IMR-90 (cell line): ENCODE measurements at regions of chr12 and their contacts with region 1.

Region 1: DNA sequence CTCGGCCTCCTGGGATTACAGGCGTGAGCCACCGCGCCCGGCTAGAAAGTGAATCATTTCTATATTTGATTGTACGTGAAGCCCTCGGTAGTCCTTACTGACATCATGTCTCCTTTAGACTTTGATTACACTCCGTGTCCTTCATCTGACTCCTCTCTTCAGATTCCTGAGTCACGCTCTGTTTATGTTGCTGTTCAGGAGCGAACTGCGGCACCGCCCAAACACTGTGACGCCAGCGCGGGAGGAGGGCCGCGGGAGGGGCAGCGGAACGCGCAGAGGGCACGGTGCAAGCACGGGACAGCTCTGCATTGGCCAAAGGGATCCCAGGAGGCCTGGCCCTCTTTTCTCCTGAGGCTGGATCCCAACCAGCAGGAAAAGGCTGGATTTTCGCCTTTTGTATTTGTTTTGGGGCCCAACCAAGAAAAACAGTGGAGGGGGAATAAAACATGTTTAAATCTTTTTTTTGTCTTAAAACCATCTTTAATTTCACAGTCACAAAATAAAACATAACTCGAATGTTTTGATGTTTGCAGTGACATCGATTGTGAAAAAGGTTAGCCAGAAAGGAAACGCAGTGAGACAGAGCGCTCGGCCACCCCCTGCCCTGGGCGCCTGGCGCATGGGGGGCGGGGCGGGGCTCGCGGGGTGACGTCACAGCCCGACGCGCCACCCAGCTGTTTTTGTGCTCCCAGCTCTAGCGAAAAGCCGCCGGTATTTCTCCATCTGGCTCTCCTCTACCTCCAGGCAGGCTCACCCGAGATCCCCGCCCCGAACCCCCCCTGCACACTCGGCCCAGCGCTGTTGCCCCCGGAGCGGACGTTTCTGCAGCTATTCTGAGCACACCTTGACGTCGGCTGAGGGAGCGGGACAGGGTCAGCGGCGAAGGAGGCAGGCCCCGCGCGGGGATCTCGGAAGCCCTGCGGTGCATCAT is at the start of gene GABARAPL1:
- DNase-seq: peak; percentile 100
- ATAC-seq: peak; percentile 90
- H3K4me3 ChIP-seq: peak within 1 kb of the TSS; percentile 89
- H3K27ac ChIP-seq: peak within 1 kb of the TSS; percentile 98
- H3K4me1 ChIP-seq: peaks cover 3% of the 10 kb centered on the region; the same call in 1 of the 2 replicates
- H3K27me3 ChIP-seq: no peaks in the 10 kb centered on the region
- CTCF ChIP-seq: no peak
- POLR2A ChIP-seq: peak; percentile 88
- RAD21 ChIP-seq: no peak; the same call in 1 of the 2 replicates
- total RNA-seq, gene GABARAPL1: 51.6 and 63.0 TPM in 2 replicates

Region 2: DNA sequence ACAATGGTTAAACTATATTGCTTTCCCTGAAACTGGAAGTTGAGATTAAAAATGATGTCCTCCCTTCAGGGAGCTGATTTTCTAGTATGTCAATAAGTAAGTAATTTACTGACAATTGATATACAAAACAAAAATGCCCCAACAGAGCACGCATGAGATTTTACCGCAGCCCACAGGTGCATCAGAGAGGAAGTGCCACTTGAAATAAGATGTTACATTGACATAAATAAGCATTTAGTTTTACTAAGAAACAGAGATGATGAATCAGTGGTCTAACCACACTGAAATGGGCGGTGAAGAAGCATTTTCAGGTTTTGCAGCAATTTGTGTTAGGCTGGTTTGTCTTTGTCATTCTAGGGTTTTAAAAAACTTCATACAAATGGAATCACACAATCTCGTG is 470.7 kb before region 1 on chr12:
- CTCF ChIA-PET with region 1: no interaction called
- POLR2A ChIA-PET with region 1: no interaction called
- dilution Hi-C with region 1: no loop called
- in situ Hi-C with region 1: no loop called
- intact Hi-C with region 1: loop called (anchors 10 kb)
- DNase-seq: no peak
- ATAC-seq: no peak
- H3K4me3 ChIP-seq: no peak overlapping the region
- H3K27ac ChIP-seq: no peak overlapping the region
- H3K4me1 ChIP-seq: no peaks in the 10 kb centered on the region
- H3K27me3 ChIP-seq: peaks cover 10% of the 10 kb centered on the region
- CTCF ChIP-seq: no peak
- POLR2A ChIP-seq: no peak
- RAD21 ChIP-seq: no peak

Region 3: DNA sequence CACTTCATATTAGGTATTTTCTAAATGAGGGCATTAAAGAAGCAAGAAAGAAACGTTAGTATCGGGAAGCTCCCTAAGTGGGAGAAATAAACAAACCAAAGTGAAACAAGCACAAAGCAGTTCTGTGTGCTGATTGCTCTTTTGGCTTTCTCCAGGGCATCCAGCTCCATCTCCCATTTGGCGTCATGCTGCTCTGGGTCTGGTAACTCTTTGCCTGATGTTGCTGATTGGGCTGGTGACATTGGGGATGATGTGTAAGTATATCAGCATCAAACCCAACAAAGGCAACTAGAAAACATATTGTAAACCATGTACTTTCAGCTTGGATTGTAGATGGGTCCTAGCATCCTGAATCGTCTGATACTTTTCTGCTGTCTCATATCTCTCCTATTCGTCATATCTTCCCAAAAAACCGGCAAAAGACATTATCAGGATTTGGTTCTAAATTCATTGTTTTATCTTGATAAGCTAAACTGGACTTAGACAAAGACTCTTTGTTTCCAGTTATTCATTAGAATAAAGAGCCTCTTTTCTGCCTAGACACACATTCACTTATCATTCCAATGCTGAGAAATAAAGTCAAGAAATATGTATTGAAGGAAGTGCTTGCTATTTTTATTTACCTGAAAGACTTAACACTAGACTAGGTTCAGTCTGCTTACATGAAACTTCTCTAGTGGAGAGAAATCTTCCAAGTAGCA is 199.7 kb before region 1 on chr12:
- CTCF ChIA-PET with region 1: no interaction called
- POLR2A ChIA-PET with region 1: no interaction called
- dilution Hi-C with region 1: no loop called
- in situ Hi-C with region 1: no loop called
- intact Hi-C with region 1: loop called (anchors 2 kb)
- DNase-seq: no peak
- ATAC-seq: no peak
- H3K4me3 ChIP-seq: no peak overlapping the region
- H3K27ac ChIP-seq: no peak overlapping the region
- H3K4me1 ChIP-seq: peaks cover 5% of the 10 kb centered on the region
- H3K27me3 ChIP-seq: peaks cover 2% of the 10 kb centered on the region
- CTCF ChIP-seq: no peak
- POLR2A ChIP-seq: no peak
- RAD21 ChIP-seq: no peak

Region 4: DNA sequence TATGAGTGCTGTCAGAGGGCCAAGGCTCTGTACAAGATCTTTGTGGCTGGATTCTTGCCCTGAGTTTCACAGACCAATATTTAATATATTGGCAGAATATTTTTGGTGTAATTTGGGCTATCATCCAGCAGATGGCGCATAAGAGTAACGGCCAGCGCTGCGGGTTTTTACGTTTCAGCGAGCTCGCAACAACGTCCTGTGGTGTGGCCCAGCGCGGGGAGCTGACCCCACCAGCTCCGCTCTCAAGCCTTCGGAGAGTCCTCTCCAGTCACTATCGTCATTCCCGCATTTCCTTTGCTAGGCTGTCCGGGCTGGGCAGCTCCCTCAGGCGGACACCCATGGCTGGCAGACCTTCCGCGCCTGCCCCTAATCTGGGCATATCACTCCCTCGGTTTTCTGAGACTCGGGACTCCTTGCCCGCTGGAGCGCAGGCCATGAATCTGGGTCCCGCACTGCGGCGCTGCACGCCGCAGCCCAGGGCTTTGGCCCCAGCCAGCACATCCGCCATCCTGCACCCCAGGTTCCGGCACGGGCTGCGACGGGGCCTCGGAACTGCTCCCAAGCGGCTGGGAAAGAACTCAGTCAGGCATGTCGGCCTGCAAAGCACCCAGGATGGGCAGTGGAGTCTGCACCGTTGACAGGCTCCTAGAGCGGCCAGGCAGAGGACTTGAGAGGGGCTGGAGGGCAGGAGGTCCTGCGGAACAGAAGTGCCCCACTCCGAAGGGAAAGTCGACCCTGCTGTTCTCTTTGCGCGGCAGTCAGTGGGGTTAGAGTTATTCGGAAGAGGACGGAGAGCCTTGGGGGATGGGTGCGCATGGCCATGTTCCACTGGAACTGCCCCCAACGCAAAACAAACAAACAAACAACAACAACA is 59.0 kb before region 1 on chr12:
- CTCF ChIA-PET with region 1: interaction called, 6 read pairs
- POLR2A ChIA-PET with region 1: interaction called, 9 read pairs
- dilution Hi-C with region 1: no loop called
- in situ Hi-C with region 1: no loop called
- intact Hi-C with region 1: loop called (anchors 1 kb)
- DNase-seq: peak; percentile 63
- ATAC-seq: peak; percentile 95
- H3K4me3 ChIP-seq: peak overlapping the region; percentile 37
- H3K27ac ChIP-seq: peak overlapping the region; percentile 68
- H3K4me1 ChIP-seq: peaks cover 8% of the 10 kb centered on the region
- H3K27me3 ChIP-seq: no peaks in the 10 kb centered on the region
- CTCF ChIP-seq: peak; percentile 75
- POLR2A ChIP-seq: no peak
- RAD21 ChIP-seq: peak; percentile 77

Region 5: DNA sequence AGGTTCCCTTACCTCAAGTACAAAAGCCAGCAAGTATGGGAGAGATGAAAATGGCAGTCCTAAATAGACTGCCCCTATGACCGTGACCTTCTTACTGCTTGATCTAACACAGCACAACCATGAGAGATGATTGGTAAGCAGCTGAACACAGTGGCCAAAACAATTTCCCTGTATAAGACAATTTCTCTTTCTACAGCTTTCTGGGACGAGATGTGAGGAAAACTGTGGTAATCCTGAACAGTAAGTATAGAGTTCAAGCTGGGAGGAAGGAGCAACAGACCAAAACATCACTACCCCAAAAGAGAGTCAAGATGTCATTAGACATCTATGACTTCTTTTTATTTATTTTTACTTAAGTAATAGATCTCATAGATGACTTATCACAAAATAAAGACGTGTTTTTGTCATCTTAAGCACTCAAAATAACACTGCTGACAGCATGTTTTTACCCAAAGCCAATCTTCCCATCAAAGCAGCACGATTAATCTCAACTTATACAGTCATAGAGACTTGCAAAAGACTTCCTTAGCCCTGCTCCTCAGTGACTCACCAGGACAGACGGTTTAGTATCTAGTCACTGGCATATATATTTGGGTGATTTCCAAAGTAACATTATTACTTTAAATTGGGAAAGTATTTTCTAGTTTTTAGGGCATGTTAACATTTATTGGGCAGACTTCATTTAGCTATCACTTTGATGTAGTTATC is 30.0 kb before region 1 on chr12:
- CTCF ChIA-PET with region 1: no interaction called
- POLR2A ChIA-PET with region 1: interaction called, 4 read pairs
- dilution Hi-C with region 1: no loop called
- in situ Hi-C with region 1: no loop called
- intact Hi-C with region 1: loop called (anchors 1 kb)
- DNase-seq: peak; percentile 92
- ATAC-seq: peak; percentile 63
- H3K4me3 ChIP-seq: no peak overlapping the region
- H3K27ac ChIP-seq: peak overlapping the region; percentile 88
- H3K4me1 ChIP-seq: peaks cover 28% of the 10 kb centered on the region
- H3K27me3 ChIP-seq: no peaks in the 10 kb centered on the region
- CTCF ChIP-seq: no peak
- POLR2A ChIP-seq: no peak
- RAD21 ChIP-seq: no peak

Region 6: DNA sequence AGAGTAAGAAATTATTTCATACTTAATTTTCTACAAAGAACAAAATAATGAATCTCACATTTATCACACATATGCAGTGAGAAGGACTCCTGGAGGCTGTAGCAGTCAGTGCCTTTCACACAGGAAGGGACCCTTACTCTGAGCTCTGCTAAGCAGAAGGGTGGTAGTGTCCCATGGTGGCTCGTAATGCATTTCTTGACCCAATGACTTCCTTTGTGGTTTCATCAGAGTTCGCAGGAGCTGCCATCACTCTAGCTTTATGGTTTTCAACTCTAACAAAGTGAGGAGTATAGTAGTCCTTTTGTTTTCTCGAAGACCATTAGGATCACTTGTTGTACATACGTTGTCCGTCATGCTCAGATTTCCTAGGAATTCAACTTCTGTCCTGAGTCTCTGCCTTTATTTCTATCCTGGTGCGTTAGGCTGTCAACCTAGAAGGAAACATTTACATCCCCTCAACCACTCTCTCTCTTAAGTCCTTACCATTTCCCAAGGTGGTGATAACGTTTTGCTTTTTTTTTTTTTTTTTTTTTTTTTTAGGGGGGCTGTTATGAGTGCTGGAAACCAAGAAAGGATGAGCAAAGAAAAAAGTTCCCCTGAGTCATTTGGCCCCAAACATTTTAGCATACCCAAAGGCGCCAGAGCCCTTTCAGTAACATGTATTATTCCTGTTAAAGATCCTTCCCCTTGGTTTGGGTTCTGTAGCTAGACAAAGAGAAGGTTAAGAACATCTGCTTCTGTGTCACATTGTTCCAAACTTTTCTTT is 37.4 kb after region 1 on chr12:
- CTCF ChIA-PET with region 1: no interaction called
- POLR2A ChIA-PET with region 1: no interaction called
- dilution Hi-C with region 1: no loop called
- in situ Hi-C with region 1: no loop called
- intact Hi-C with region 1: no loop called
- DNase-seq: no peak
- ATAC-seq: no peak
- H3K4me3 ChIP-seq: no peak overlapping the region
- H3K27ac ChIP-seq: no peak overlapping the region
- H3K4me1 ChIP-seq: no peaks in the 10 kb centered on the region
- H3K27me3 ChIP-seq: no peaks in the 10 kb centered on the region
- CTCF ChIP-seq: no peak
- POLR2A ChIP-seq: no peak
- RAD21 ChIP-seq: no peak

Region 7: GRCh38 chr12:10304161-10304574 is 91.7 kb after region 1 on chr12:
- CTCF ChIA-PET with region 1: no interaction called
- POLR2A ChIA-PET with region 1: no interaction called
- dilution Hi-C with region 1: no loop called
- in situ Hi-C with region 1: no loop called
- intact Hi-C with region 1: loop called (anchors 1 kb)
- DNase-seq: peak; percentile 87
- ATAC-seq: peak; percentile 98
- H3K4me3 ChIP-seq: no peak overlapping the region
- H3K27ac ChIP-seq: no peak overlapping the region
- H3K4me1 ChIP-seq: no peaks in the 10 kb centered on the region
- H3K27me3 ChIP-seq: peaks cover 56% of the 10 kb centered on the region
- CTCF ChIP-seq: no peak
- POLR2A ChIP-seq: no peak
- RAD21 ChIP-seq: no peak